Activated CD4-positive, alpha-beta T cell treated with anti-CD3 and anti-CD28 coated beads for 36 hours (primary cell): ENCODE measurements at regions of chr1 and their contacts with region 1.

Region 1: GRCh38 chr1:51192213-51192843 is 43.7 kb upstream of the RNF11 start:
- DNase-seq: peak; percentile 79
- ATAC-seq: peak; percentile 33
- H3K4me3 Mint-ChIP-seq: no peak overlapping the region
- H3K27ac Mint-ChIP-seq: no peak overlapping the region
- H3K4me1 Mint-ChIP-seq: no peaks in the 10 kb centered on the region
- H3K27me3 Mint-ChIP-seq: no peaks in the 10 kb centered on the region

Region 2: DNA sequence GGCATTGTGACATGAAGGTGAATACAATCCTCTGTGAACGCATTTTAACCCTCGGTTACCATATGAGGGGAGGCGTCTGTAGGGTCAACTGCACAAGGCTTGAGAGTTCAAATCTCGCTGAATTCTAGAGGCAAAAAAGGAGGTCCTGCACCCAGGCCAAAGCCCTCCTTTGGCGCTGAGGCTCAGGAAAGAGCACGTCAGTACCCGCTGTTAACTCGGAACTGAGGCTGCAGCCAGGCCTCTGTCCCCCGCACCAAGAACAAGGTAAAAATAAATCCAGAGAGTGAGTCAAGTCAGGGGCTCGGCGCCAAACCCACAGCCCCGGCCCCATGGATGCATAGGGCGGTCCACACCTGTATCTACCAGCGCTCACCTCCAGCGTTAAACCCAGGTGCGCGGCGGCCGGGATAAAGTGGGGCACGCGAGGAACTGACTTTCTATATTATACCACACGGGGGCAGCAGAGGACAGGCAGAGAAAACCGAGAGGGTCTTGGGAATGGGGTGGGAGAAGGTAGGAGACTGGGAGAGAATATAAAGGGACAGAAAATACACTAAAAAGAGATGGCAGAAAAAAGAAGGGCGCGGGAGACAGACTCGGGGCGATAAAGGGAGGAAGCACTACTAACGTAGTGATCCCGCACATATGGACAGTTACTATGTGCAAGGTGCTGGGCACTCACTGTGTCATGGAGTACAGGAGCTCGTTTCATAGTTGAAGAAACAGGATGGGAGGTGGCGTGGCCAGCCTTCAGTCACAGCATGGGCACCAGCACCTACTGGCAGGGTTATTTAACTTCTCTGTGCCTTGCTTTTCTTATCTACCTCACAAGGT is 823.9 kb before region 1 on chr1:
- CTCF ChIA-PET with region 1: interaction called, 4 read pairs
- POLR2A ChIA-PET with region 1: no interaction called
- intact Hi-C with region 1: loop called (anchors 5 kb)
- DNase-seq: peak; percentile 59
- ATAC-seq: peak; percentile 61
- H3K4me3 Mint-ChIP-seq: no peak overlapping the region
- H3K27ac Mint-ChIP-seq: no peak overlapping the region
- H3K4me1 Mint-ChIP-seq: peaks cover 3% of the 10 kb centered on the region
- H3K27me3 Mint-ChIP-seq: peaks cover 35% of the 10 kb centered on the region

Region 3: GRCh38 chr1:50873458-50874187 is 318.7 kb before region 1 on chr1:
- CTCF ChIA-PET with region 1: interaction called, 23 read pairs
- POLR2A ChIA-PET with region 1: no interaction called
- intact Hi-C with region 1: loop called (anchors 1 kb)
- DNase-seq: peak; percentile 83
- ATAC-seq: peak; percentile 93
- H3K4me3 Mint-ChIP-seq: peak overlapping the region; percentile 42
- H3K27ac Mint-ChIP-seq: no peak overlapping the region
- H3K4me1 Mint-ChIP-seq: peaks cover 9% of the 10 kb centered on the region
- H3K27me3 Mint-ChIP-seq: no peaks in the 10 kb centered on the region

Region 4: DNA sequence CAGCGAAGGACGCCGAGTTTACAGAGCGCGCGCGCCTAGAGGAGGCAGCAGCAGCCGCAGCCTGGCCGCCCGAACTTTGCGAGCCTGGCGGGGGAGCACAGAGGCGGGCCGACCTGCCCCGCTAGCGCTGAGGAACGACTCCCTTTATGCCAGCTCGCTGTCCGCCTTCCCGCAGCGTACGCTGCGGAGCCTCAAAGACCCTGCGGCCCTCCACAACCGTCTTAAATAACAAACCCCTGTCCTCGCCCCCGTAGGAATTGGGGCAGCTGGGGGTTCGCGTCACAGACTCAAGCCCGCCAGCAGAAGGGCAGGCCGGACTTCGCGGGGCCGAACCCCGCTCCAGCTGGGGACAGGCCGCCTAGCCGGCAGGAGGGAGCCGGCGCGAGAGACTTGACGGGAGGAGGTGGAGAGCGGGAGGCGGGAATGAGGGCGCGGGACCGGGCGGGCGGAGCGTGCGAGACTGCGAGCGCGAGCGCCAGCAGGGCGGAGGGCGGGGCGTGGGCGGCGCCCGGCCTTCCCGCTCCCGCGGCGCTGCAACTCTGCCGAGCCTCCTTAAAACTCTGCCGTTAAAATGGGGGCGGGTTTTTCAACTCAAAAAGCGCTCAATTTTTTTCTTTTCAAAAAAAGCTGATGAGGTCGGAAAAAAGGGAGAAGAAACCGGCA is 224.0 kb before region 1 on chr1:
- CTCF ChIA-PET with region 1: no interaction called
- POLR2A ChIA-PET with region 1: no interaction called
- intact Hi-C with region 1: loop called in 1 of 2 experiments (anchors 10 kb)
- DNase-seq: peak; percentile 88
- ATAC-seq: peak; percentile 83
- H3K4me3 Mint-ChIP-seq: peak overlapping the region; percentile 93
- H3K27ac Mint-ChIP-seq: peak overlapping the region; percentile 84
- H3K4me1 Mint-ChIP-seq: peaks cover 25% of the 10 kb centered on the region
- H3K27me3 Mint-ChIP-seq: peaks cover 4% of the 10 kb centered on the region

Region 5: GRCh38 chr1:51131185-51131584 is 61.1 kb before region 1 on chr1:
- CTCF ChIA-PET with region 1: interaction called, 10 read pairs
- POLR2A ChIA-PET with region 1: no interaction called
- intact Hi-C with region 1: no loop called
- DNase-seq: no peak
- ATAC-seq: no peak
- H3K4me3 Mint-ChIP-seq: no peak overlapping the region
- H3K27ac Mint-ChIP-seq: no peak overlapping the region
- H3K4me1 Mint-ChIP-seq: no peaks in the 10 kb centered on the region
- H3K27me3 Mint-ChIP-seq: peaks cover 31% of the 10 kb centered on the region

Region 6: GRCh38 chr1:51214615-51215131 is 22.3 kb after region 1 on chr1:
- CTCF ChIA-PET with region 1: interaction called, 11 read pairs
- POLR2A ChIA-PET with region 1: interaction called, 3 read pairs
- intact Hi-C with region 1: no loop called
- DNase-seq: peak; percentile 15
- ATAC-seq: peak; percentile 72
- H3K4me3 Mint-ChIP-seq: no peak overlapping the region
- H3K27ac Mint-ChIP-seq: peak overlapping the region; percentile 59
- H3K4me1 Mint-ChIP-seq: peaks cover 22% of the 10 kb centered on the region
- H3K27me3 Mint-ChIP-seq: no peaks in the 10 kb centered on the region

Region 7: GRCh38 chr1:51558360-51558924 is 366.1 kb after region 1 on chr1:
- CTCF ChIA-PET with region 1: no interaction called
- POLR2A ChIA-PET with region 1: no interaction called
- intact Hi-C with region 1: no loop called
- DNase-seq: peak; percentile 42
- ATAC-seq: peak; percentile 85
- H3K4me3 Mint-ChIP-seq: no peak overlapping the region
- H3K27ac Mint-ChIP-seq: peak overlapping the region; percentile 35
- H3K4me1 Mint-ChIP-seq: peaks cover 8% of the 10 kb centered on the region
- H3K27me3 Mint-ChIP-seq: no peaks in the 10 kb centered on the region

Region 8: DNA sequence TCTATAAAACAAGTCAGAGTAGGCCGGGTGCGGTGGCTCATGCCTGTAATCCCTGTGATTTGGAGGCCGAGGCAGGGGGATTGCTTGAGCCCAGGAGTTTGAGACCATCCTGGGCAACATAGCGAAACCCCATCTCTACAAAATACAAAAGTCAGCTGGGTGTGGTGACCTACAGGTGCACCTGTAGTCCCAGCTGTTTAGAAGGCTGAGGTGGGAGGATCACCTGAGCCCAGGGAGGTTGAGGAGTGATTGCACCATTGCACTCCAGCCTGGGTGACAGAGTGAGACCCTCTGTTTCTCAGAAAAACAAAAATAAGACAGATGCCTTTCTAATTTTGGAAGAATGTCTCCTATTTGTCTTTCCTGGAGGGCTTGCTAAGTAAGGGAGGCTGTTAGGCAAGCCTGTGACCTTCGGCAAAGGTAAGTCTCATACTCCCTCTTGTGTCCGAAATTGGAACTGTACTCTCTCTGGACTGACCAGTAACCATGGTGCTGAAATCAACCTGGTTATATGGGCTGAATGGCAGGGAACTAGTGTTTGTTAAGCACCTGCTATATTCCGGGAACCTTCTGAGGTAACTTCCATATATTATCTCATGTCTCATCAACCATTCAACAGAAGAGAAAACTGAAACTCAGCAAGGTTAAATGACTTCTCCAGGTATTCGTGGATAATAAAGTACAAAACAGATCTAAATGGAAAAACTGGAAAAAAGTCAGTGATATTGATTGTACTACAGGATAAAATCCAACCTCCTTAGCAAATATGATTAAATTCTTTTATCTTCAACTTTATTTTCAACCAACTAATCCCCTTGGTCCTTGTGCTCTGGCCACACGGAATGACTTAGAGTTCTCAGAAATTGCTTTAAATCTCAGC is 810.0 kb after region 1 on chr1:
- CTCF ChIA-PET with region 1: no interaction called
- POLR2A ChIA-PET with region 1: no interaction called
- intact Hi-C with region 1: loop called in 1 of 2 experiments (anchors 2 kb)
- DNase-seq: peak; percentile 52
- ATAC-seq: peak; percentile 95
- H3K4me3 Mint-ChIP-seq: no peak overlapping the region
- H3K27ac Mint-ChIP-seq: no peak overlapping the region
- H3K4me1 Mint-ChIP-seq: no peaks in the 10 kb centered on the region
- H3K27me3 Mint-ChIP-seq: peaks cover 14% of the 10 kb centered on the region